Activated CD8-positive, alpha-beta T cell treated with anti-CD3 and anti-CD28 coated beads, Interleukin-2, amount 10 ng/mL, durations not matched to agents 7 days and 5 days (primary cell): ENCODE measurements at regions of chr7 and their contacts with region 1.

Region 1: GRCh38 chr7:122006687-122007086 is 133.7 kb downstream of the PTPRZ1 start:
- DNase-seq: no peak
- ATAC-seq: no peak
- H3K4me3 Mint-ChIP-seq: no peak overlapping the region
- H3K27ac Mint-ChIP-seq: no peak overlapping the region
- H3K4me1 Mint-ChIP-seq: no peaks in the 10 kb centered on the region
- H3K27me3 Mint-ChIP-seq: no peaks in the 10 kb centered on the region

Region 2: DNA sequence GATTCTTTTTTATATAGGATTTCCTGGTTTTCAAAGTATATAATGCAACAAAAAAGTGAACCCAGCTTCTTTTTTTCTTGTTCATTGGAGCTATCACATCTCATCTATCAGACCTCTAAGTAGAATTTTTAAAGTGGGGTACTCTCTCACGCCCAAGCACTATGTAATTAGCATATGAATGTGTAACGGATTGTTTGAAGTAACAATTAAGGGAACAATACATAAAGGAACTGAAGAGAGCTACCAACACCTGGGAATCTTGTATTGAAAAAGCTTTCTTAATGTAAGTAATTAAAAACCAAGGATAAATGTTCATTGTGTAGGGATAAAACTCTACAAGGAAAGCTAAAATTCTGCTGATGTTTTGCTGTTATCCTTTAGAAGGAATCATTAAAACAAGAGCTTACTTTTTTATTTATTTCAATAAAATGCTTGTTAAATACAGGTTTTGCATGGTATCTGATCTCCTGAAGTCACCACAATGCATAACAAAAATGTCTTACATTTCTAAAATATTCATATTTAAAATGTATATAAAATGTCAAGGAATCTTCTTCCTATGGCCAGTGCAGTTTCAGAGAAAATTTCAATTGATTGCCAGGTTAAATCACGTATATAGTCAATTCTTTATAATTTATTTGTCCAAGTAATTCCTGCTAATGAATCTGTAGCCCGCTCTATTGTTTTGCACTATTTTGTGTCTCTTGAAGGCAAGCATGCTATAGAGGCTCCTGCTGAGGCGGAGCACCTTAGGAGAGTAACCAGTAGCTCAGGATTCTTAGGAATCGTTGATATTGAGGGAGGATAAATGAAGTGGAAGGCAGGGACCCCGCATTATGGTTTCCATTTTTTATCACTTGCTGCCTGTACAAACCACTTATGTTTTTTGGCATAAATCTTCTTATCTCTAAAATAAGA is 82.2 kb before region 1 on chr7:
- CTCF ChIA-PET with region 1: no interaction called
- POLR2A ChIA-PET with region 1: no interaction called
- DNase-seq: no peak
- ATAC-seq: no peak
- H3K4me3 Mint-ChIP-seq: no peak overlapping the region
- H3K27ac Mint-ChIP-seq: no peak overlapping the region
- H3K4me1 Mint-ChIP-seq: no peaks in the 10 kb centered on the region
- H3K27me3 Mint-ChIP-seq: no peaks in the 10 kb centered on the region

Region 3: DNA sequence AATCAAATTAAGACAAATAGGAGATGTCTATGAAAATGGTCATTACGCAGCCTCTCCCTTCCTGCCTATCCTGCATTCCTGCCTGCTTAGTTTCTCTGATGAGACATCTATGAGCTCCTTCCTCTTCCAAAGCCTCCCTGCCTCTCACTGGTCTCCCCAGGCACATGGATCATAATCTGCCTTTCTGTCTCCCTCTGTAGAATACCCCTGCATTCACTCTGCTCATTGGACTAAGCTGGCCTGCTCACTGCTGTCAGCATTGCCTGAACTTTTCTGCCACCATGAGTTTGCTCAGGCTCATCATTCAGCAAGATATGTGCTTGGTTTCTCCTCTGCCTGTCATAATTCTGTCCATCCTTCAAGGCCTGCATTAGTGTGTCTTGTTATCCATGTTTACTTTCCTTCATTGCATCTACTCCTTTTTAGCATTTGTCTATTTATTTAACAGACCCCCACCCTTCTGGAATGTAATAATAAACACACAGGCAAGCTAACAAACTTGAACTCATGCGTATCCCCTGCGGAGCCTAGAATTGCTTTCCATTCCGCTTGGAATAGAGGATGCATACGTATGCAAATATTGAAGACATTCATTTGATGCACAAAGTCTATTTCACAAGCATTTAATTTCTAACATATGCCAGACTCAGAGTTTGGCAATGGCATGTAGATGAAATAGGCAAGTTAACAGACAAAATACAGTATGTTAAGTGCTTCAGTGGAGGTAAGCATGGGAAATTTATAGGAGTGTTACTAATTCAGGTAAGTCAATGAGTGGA is 45.4 kb before region 1 on chr7:
- CTCF ChIA-PET with region 1: no interaction called
- POLR2A ChIA-PET with region 1: no interaction called
- DNase-seq: no peak
- ATAC-seq: no peak
- H3K4me3 Mint-ChIP-seq: no peak overlapping the region
- H3K27ac Mint-ChIP-seq: no peak overlapping the region
- H3K4me1 Mint-ChIP-seq: no peaks in the 10 kb centered on the region
- H3K27me3 Mint-ChIP-seq: no peaks in the 10 kb centered on the region

Region 4: GRCh38 chr7:121994625-121995410 is 11.9 kb before region 1 on chr7:
- CTCF ChIA-PET with region 1: interaction called, 15 read pairs
- POLR2A ChIA-PET with region 1: no interaction called
- DNase-seq: peak; percentile 61
- ATAC-seq: peak; percentile 67
- H3K4me3 Mint-ChIP-seq: no peak overlapping the region
- H3K27ac Mint-ChIP-seq: no peak overlapping the region
- H3K4me1 Mint-ChIP-seq: no peaks in the 10 kb centered on the region
- H3K27me3 Mint-ChIP-seq: no peaks in the 10 kb centered on the region

Region 5: GRCh38 chr7:122027058-122027457 is 20.4 kb after region 1 on chr7:
- CTCF ChIA-PET with region 1: no interaction called
- POLR2A ChIA-PET with region 1: no interaction called
- DNase-seq: no peak
- ATAC-seq: no peak
- H3K4me3 Mint-ChIP-seq: no peak overlapping the region
- H3K27ac Mint-ChIP-seq: no peak overlapping the region
- H3K4me1 Mint-ChIP-seq: no peaks in the 10 kb centered on the region
- H3K27me3 Mint-ChIP-seq: no peaks in the 10 kb centered on the region